ENCODE measurements at regions of chr1 and their contacts with region 1.

Region 1: GRCh38 chr1:202135221-202135721 is 9.3 kb downstream of the ARL8A start:
- DNase-seq: peak in 8 of 10 donors; percentile 56 to 82 (median 72)
- H3K4me3 ChIP-seq: peak overlapping the region in 8 of 59 donors; percentile 1 to 38 (median 20)
- H3K27ac ChIP-seq: peak overlapping the region in 58 of 59 donors; percentile 71 to 99 (median 98)
- H3K27me3 ChIP-seq: no peaks in the 10 kb centered on the region
- CTCF ChIP-seq: peak; percentile 81 to 97 (median 94)

Region 2: GRCh38 chr1:201888282-201889089 is 246.8 kb before region 1 on chr1 and contains the start of gene SHISA4:
- intact Hi-C with region 1: loop called in 1 of 2 experiments (anchors 5 kb)
- DNase-seq: peak; percentile 83 to 97 (median 94)
- H3K4me3 ChIP-seq: peak within 1 kb of the TSS; percentile 47 to 95 (median 86)
- H3K27ac ChIP-seq: peak within 1 kb of the TSS; percentile 60 to 99 (median 97)
- H3K27me3 ChIP-seq: no peaks in the 10 kb centered on the region
- CTCF ChIP-seq: peak in 25 of 56 donors; percentile 5 to 49 (median 17)
- total RNA-seq, gene SHISA4: 65.2 to 163 (median 110) TPM

Region 3: GRCh38 chr1:201895913-201896807 is 239.1 kb before region 1 on chr1:
- intact Hi-C with region 1: loop called in 1 of 2 experiments (anchors 5 kb)
- DNase-seq: peak; percentile 73 to 90 (median 89)
- H3K4me3 ChIP-seq: peak overlapping the region in 40 of 59 donors; percentile 1 to 56 (median 34)
- H3K27ac ChIP-seq: peak overlapping the region in 53 of 59 donors; percentile 4 to 99 (median 70)
- H3K27me3 ChIP-seq: no peaks in the 10 kb centered on the region
- CTCF ChIP-seq: peak; percentile 75 to 98 (median 93)

Region 4: GRCh38 chr1:202009326-202010179 is 125.7 kb before region 1 on chr1:
- intact Hi-C with region 1: loop called in 1 of 2 experiments (anchors 5 kb)
- DNase-seq: peak; percentile 57 to 90 (median 78)
- H3K4me3 ChIP-seq: no peak overlapping the region
- H3K27ac ChIP-seq: peak overlapping the region in 4 of 59 donors; percentile 1 to 64 (median 33)
- H3K27me3 ChIP-seq: no peaks in the 10 kb centered on the region
- CTCF ChIP-seq: peak; percentile 73 to 97 (median 89)

Region 5: GRCh38 chr1:202085682-202086404 is 49.4 kb before region 1 on chr1:
- intact Hi-C with region 1: loop called in 1 of 2 experiments (anchors 2 kb)
- DNase-seq: peak in 9 of 10 donors; percentile 43 to 78 (median 67)
- H3K4me3 ChIP-seq: peak overlapping the region in 6 of 59 donors; percentile 2 to 35 (median 22)
- H3K27ac ChIP-seq: peak overlapping the region; percentile 79 to 99 (median 95)
- H3K27me3 ChIP-seq: no peaks in the 10 kb centered on the region
- CTCF ChIP-seq: peak in 1 of 56 donors; percentile 0

Region 6: GRCh38 chr1:202122639-202123335 is 12.5 kb before region 1 on chr1 and contains the start of gene GPR37L1:
- intact Hi-C with region 1: loop called (anchors 1 to 2 kb)
- DNase-seq: peak in 9 of 10 donors; percentile 78 to 90 (median 86)
- H3K4me3 ChIP-seq: peak within 1 kb of the TSS; percentile 39 to 87 (median 64)
- H3K27ac ChIP-seq: peak within 1 kb of the TSS; percentile 68 to 99 (median 98)
- H3K27me3 ChIP-seq: no peaks in the 10 kb centered on the region
- CTCF ChIP-seq: peak; percentile 39 to 87 (median 75)
- total RNA-seq, gene GPR37L1: 26.2 to 167 (median 58.0) TPM